Right cardiac atrium (tissue), 5 donors: ENCODE measurements at regions of chr14 and their contacts with region 1.

Region 1: DNA sequence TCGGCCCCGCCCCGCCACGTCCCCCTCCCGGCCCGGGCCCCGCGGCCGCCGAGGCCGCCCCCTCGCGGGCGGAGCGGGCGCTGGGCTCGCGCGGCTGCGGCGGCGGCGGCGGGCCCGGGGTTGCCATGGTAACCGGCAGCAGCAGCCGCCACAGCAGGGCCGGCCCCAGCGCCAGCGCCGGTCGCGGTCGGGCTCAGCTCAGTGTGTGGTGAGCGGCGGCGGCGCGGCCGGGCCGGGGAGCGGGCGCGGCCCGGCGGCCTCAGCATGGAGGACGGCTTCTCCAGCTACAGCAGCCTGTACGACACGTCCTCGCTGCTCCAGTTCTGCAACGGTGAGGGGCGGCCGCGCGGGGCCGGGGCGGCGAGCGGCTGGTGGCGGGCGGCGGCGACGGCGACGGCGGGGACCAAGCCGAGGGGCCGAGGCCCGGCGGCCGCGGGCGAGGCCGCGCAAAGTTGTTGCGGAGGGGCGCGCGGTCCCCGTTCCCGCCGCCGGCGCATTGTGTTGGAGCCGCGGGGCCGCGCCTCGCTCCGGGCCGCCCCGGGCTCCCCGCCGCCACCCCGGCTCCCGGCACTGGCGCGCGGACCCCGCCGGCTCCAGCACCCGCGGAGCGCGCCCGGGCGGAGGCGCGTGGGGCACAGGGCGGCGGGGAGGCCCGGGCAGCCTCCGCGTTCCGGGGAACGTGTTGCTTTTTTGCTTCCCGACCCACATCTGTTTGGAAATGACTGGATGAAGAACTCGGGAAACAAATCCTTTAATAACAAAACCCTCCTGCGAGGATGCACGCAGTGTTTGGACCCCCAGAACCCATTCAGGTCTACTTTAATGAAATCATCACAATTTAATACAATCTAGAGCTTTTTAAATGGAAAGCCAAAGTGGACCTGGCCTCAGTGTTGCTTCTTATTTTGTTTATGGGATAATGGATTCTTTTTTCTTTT is at the start of gene EML1:
- DNase-seq: peak; percentile 91 to 96 (median 95)
- ATAC-seq: peak; percentile 93
- H3K4me3 ChIP-seq: peak within 1 kb of the TSS; percentile 97
- H3K27ac ChIP-seq: peak within 1 kb of the TSS; percentile 70
- H3K4me1 ChIP-seq: peaks cover 9% of the 10 kb centered on the region
- H3K27me3 ChIP-seq: no peaks in the 10 kb centered on the region
- total RNA-seq, gene EML1: 32.5 to 39.1 (median 34.8) TPM

Region 2: DNA sequence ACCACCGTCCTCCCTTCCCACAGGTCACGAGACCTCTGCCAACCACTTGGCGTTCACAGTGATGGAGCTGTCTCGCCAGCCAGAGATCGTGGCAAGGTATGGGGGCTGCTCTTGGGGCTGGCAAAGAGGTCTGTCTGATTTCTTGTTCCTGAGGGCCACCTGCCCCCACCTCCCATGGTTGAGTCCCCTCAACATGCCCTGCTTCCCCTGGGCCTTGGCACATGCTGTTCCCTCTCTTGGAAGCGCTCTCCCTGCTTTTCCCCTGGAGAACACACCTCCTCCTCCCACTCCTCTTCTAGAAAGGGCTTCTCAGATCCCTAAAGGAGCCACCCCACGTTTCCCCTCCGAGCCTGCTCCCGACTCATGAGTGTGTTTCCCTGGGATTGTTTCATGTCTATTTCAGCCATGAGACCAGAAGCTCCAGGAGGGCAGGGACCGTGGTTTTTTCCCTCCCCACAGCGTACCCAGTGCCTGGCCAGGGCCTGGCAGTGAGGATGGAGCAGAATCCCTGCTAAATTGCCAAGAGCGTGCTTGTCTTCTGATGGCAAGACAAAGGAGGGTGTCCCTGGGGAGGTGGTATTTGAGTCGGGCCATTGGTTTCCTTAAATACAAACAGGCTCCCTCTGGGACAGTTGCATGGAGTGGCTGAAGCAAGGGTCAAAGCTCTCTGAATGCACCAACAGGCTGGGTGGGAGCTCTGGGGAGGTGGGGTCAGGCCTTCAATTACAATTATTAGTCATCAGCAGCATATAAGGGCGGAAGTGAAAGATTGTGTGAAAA is 75.3 kb before region 1 on chr14:
- intact Hi-C with region 1: no loop called
- DNase-seq: no peak
- ATAC-seq: no peak
- H3K4me3 ChIP-seq: no peak overlapping the region
- H3K27ac ChIP-seq: no peak overlapping the region
- H3K4me1 ChIP-seq: no peaks in the 10 kb centered on the region
- H3K27me3 ChIP-seq: no peaks in the 10 kb centered on the region

Region 3: GRCh38 chr14:99729991-99730868 is 63.3 kb before region 1 on chr14:
- intact Hi-C with region 1: loop called in 3 of 4 experiments (anchors 5 to 10 kb)
- DNase-seq: peak; percentile 69 to 93 (median 91)
- ATAC-seq: peak; percentile 36 to 58
- H3K4me3 ChIP-seq: peak overlapping the region; percentile 62
- H3K27ac ChIP-seq: no peak overlapping the region
- H3K4me1 ChIP-seq: no peaks in the 10 kb centered on the region
- H3K27me3 ChIP-seq: no peaks in the 10 kb centered on the region

Region 4: GRCh38 chr14:99752486-99753121 is 40.9 kb before region 1 on chr14:
- intact Hi-C with region 1: loop called in 2 of 4 experiments (anchors 5 to 10 kb)
- DNase-seq: peak in 2 of 3 donors; percentile 46 to 52
- ATAC-seq: no peak
- H3K4me3 ChIP-seq: no peak overlapping the region
- H3K27ac ChIP-seq: peak overlapping the region; percentile 21
- H3K4me1 ChIP-seq: peaks cover 22% of the 10 kb centered on the region
- H3K27me3 ChIP-seq: no peaks in the 10 kb centered on the region